HCT116 (cell line): ENCODE measurements at regions of chr1 and their contacts with region 1.

Region 1: GRCh38 chr1:84541679-84542078 is 32.6 kb downstream of the CTBS start:
- DNase-seq: peak; percentile 18
- ATAC-seq: no peak
- H3K4me3 ChIP-seq: no peak overlapping the region
- H3K27ac ChIP-seq: no peak overlapping the region
- H3K4me1 ChIP-seq: peaks cover 0 to 2% of the 10 kb centered on the region in 2 experiments; a peak in 1 of 4 replicates
- H3K27me3 ChIP-seq: no peaks in the 10 kb centered on the region
- CTCF ChIP-seq: peak; percentile 30 to 57 (median 57); a peak in 4 of 6 replicates
- POLR2A ChIP-seq: no peak
- RAD21 ChIP-seq: peak; percentile 79

Region 2: DNA sequence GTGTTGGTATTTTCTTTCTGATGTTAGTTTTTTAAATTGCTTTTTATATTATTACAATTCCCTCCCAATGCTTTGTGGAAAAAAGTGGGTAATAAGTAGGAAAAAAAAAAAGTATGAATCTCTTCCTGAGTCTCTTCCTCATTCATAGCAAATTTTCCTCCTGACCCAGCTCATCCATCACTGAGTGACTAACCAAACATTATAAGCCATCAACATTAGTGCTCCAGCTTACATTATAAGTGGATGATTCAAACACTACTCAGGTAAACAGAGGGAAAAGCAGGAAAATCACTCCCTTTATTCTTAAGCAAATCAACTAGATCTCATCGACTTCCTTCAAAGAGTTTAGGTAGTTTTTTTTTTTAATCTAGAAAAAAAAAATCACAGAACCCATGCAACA is 255.6 kb before region 1 on chr1:
- CTCF ChIA-PET with region 1: no interaction called
- POLR2A ChIA-PET with region 1: no interaction called
- RAD21 ChIA-PET with region 1: no interaction called
- intact Hi-C with region 1: no loop called
- DNase-seq: no peak
- ATAC-seq: no peak
- H3K4me3 ChIP-seq: no peak overlapping the region
- H3K27ac ChIP-seq: no peak overlapping the region; the same call in 1 of the 2 replicates
- H3K4me1 ChIP-seq: peaks cover 0 to 3% of the 10 kb centered on the region in 2 experiments; a peak in 2 of 4 replicates
- H3K27me3 ChIP-seq: no peaks in the 10 kb centered on the region
- CTCF ChIP-seq: no peak
- POLR2A ChIP-seq: no peak
- RAD21 ChIP-seq: no peak

Region 3: DNA sequence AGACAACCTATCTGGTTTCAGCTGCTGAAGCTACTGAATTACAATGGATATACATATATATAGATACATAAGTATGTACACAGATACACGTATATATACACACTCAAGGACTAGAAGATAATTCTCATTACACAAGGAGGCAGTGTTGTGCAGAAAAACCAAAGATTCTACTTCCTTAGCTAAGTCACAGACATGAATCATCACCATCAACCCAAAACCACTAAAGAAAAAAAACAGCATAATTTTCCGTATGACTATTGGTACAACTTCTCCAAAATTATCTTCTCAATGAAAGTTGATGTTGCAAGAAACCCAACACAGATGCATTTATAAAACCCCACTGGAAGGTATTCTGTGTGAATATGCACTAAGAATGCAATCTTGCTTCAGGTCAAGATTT is 99.4 kb before region 1 on chr1:
- CTCF ChIA-PET with region 1: interaction called, 3 read pairs
- POLR2A ChIA-PET with region 1: no interaction called
- RAD21 ChIA-PET with region 1: no interaction called
- intact Hi-C with region 1: loop called (anchors 5 kb)
- DNase-seq: peak; percentile 67
- ATAC-seq: peak; percentile 93
- H3K4me3 ChIP-seq: no peak overlapping the region
- H3K27ac ChIP-seq: no peak overlapping the region
- H3K4me1 ChIP-seq: peaks cover 6 to 20% of the 10 kb centered on the region in 2 experiments; a peak in 3 of 4 replicates
- H3K27me3 ChIP-seq: no peaks in the 10 kb centered on the region
- CTCF ChIP-seq: peak; percentile 21 to 76 (median 57); a peak in 5 of 6 replicates
- POLR2A ChIP-seq: no peak
- RAD21 ChIP-seq: peak; percentile 85